ENCODE measurements at regions of chr2 and their contacts with region 1.

Region 1: GRCh38 chr2:37672104-37672869 is 845 bp upstream of the CDC42EP3 start:
- DNase-seq: peak; percentile 81
- ATAC-seq: peak; percentile 40
- H3K4me3 ChIP-seq: peak overlapping the region; percentile 90
- H3K27ac ChIP-seq: 0 out of 2 replicates have a peak overlapping the region, but pooled peaks have one; percentile 2
- H3K4me1 ChIP-seq: peaks cover 35% of the 10 kb centered on the region
- H3K27me3 ChIP-seq: no peaks in the 10 kb centered on the region
- CTCF ChIP-seq: no peak

Region 2: DNA sequence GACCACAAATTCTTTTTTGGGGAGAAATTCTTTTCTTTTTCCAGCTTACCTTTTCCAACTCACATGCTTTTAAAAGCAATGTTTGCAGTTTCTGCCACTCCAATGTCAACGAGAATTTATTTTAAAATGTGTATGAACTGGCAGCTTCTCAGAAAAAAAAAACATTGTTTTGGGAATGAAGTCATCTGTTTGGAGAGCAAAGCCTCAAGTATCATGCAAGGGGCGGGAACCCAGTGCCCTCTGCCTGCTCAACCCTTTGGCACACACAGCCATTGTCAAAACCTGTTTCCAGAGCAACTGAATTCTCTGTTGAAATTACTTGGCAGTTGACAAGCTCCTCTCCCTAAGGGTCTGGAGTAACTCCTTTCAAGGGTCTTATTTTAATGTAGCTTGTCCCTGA is 199.3 kb before region 1 on chr2:
- CTCF ChIA-PET with region 1: no interaction called
- POLR2A ChIA-PET with region 1: no interaction called
- intact Hi-C with region 1: loop called (anchors 10 kb)
- DNase-seq: peak; percentile 92
- ATAC-seq: peak; percentile 92
- H3K4me3 ChIP-seq: peak overlapping the region; percentile 17; the same call in 1 of the 2 replicates
- H3K27ac ChIP-seq: peak overlapping the region; percentile 82
- H3K4me1 ChIP-seq: peaks cover 35% of the 10 kb centered on the region
- H3K27me3 ChIP-seq: no peaks in the 10 kb centered on the region
- CTCF ChIP-seq: no peak

Region 3: GRCh38 chr2:37711308-37711731 is 39.0 kb after region 1 on chr2:
- CTCF ChIA-PET with region 1: interaction called, 3 read pairs
- POLR2A ChIA-PET with region 1: interaction called, 11 read pairs
- intact Hi-C with region 1: no loop called
- DNase-seq: peak; percentile 94
- ATAC-seq: peak; percentile 98
- H3K4me3 ChIP-seq: no peak overlapping the region
- H3K27ac ChIP-seq: peak overlapping the region; percentile 3; the same call in 1 of the 2 replicates
- H3K4me1 ChIP-seq: peaks cover 28% of the 10 kb centered on the region
- H3K27me3 ChIP-seq: no peaks in the 10 kb centered on the region
- CTCF ChIP-seq: no peak

Region 4: DNA sequence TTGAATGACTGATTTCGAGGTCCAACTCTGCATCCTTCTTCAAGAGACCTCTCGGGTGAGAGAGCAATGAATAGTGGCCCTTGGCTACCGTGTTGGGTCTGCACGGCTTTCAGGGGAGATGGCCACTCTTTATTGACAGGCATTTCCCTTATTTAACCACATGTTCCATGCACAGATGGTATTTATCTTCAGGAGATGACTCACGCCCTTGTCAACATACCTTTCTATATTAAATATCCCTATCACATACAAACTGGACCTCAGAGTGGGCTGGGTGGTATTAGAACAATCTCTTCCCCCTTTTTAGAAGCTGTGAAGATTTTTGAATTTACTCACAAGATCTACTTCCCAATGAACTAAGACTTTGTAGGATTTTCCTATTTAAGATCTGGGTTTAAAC is 108.7 kb after region 1 on chr2:
- CTCF ChIA-PET with region 1: no interaction called
- POLR2A ChIA-PET with region 1: no interaction called
- intact Hi-C with region 1: loop called (anchors 5 kb)
- DNase-seq: peak; percentile 86
- ATAC-seq: peak; percentile 69
- H3K4me3 ChIP-seq: no peak overlapping the region; the same call in 1 of the 2 replicates
- H3K27ac ChIP-seq: peak overlapping the region; percentile 56
- H3K4me1 ChIP-seq: peaks cover 58% of the 10 kb centered on the region
- H3K27me3 ChIP-seq: no peaks in the 10 kb centered on the region
- CTCF ChIP-seq: no peak

Region 5: DNA sequence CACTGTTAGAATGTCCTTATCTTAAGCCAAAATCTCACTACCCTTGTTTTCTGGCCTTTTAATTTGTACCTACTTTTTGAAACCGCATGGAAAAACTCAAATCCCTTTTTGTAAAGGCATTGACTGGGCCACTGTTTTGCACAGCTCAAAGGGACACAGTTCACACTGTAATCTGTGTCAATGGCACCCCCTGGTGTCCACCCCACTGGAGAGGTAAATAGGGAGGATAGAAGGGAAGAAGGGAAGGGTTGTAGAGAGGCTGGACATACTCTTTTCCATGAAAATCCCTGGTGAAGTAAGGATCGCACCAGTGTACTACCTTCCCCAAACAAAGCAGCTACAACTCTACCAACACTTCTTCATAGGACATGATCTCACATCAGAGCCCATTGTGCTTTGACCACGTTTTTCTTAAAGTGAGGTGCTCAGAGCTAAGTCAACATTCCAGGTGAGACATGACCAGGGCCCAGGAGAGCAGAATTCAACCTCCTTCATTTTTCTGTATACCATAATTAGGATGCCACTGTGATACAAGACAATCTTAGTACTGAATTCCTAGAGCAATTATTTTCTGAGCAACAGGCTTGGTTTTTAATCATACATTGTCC is 160.4 kb after region 1 on chr2:
- CTCF ChIA-PET with region 1: interaction called, 3 read pairs
- POLR2A ChIA-PET with region 1: no interaction called
- intact Hi-C with region 1: loop called (anchors 2 kb)
- DNase-seq: peak; percentile 94
- ATAC-seq: peak; percentile 99
- H3K4me3 ChIP-seq: no peak overlapping the region
- H3K27ac ChIP-seq: no peak overlapping the region
- H3K4me1 ChIP-seq: peaks cover 6% of the 10 kb centered on the region; the same call in 1 of the 2 replicates
- H3K27me3 ChIP-seq: no peaks in the 10 kb centered on the region
- CTCF ChIP-seq: peak; percentile 95

Measured in PC-3 (cell line).